ENCODE measurements at regions of chr20 and their contacts with region 1.

Region 1: DNA sequence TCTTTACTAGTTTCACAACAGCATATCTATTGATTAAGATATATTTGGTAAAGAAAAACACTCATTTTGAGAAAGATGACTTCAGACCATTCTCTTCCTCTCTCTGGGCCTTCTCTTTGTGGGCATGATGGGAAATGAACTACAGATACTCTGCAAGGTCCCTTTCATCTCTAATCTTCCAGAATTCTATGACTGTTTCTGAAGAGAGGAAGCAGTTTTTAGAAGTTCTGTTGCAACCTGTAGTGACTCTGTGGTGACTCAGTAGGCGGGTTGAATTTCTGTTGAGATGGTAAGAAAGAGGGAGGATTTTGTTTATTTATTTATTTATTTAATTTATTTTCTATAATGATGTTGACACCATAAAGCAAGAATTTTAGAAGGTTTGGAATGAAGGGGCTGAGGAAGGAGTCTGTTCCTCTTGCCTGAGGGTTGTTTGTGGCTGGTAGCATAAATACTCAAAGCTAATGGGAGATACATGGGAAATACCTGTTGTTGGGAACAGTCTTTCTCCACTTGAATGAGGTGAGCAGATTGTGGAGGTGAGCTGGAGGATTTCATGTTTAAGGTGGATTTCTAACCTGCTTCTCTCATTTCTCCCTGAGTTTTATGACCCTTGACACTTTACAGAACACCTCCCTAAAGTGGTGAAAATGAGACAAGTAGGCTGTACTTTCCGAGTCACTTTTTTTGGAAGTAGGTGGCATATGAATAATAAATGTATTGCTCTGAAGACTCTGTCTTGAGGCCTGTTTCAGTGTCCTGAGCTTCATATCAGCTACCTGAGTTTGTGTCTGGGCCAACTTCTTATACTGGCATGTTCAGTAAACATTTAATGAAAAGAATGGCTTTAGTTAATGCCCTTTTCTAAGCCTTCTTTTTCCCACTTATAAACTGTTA is 15.0 kb downstream of the ACSS2 start:
- DNase-seq: peak in 2 of 35 experiments; percentile 16 to 19
- ATAC-seq: peak; percentile 74 to 91 (median 89)
- H3K4me3 ChIP-seq: no peak overlapping the region
- H3K4me3 Mint-ChIP-seq: no peak overlapping the region
- H3K27ac ChIP-seq: no peak overlapping the region
- H3K27ac Mint-ChIP-seq: peak overlapping the region; percentile 23 to 49
- H3K4me1 ChIP-seq: peaks cover 0 to 11% of the 10 kb centered on the region in 2 experiments
- H3K4me1 Mint-ChIP-seq: peaks cover 24 to 31% (median 29%) of the 10 kb centered on the region in 3 donors
- H3K27me3 ChIP-seq: no peaks in the 10 kb centered on the region
- H3K27me3 Mint-ChIP-seq: no peaks in the 10 kb centered on the region

Region 2: DNA sequence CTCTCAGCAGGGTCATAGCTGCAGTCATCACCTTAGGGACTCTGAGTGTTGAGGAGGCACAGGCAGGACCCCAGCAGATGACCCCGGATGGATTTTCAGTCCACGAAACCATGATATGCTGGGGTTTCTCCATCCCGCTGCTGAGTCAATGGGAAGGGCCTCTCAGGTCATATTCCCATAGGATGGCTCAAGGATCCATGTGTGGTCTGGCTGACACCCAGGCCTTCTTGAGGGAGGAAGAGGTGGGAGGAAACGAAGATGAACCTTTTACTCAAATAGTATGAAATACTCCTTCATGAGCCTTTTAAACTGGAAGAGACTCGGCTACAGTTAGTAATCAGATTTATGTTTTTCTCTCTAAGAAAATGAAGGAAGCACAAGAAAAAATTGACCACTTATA is 908.0 kb before region 1 on chr20:
- CTCF ChIA-PET with region 1: no interaction called
- POLR2A ChIA-PET with region 1: interaction called in 1 of 2 experiments, 12 read pairs
- DNase-seq: no peak
- ATAC-seq: no peak
- H3K4me3 ChIP-seq: no peak overlapping the region
- H3K4me3 Mint-ChIP-seq: no peak overlapping the region
- H3K27ac ChIP-seq: no peak overlapping the region
- H3K27ac Mint-ChIP-seq: no peak overlapping the region
- H3K4me1 ChIP-seq: no peaks in the 10 kb centered on the region
- H3K4me1 Mint-ChIP-seq: no peaks in the 10 kb centered on the region
- H3K27me3 ChIP-seq: peaks cover 0 to 4% of the 10 kb centered on the region in 2 experiments
- H3K27me3 Mint-ChIP-seq: peaks cover 6 to 12% of the 10 kb centered on the region in 2 donors

Region 3: GRCh38 chr20:34834459-34834893 is 56.9 kb before region 1 on chr20:
- CTCF ChIA-PET with region 1: no interaction called
- POLR2A ChIA-PET with region 1: interaction called in 1 of 2 experiments, 10 read pairs
- DNase-seq: peak in 2 of 35 experiments; percentile 2 to 58
- ATAC-seq: peak in 2 of 4 experiments; percentile 38 to 44
- H3K4me3 ChIP-seq: no peak overlapping the region
- H3K4me3 Mint-ChIP-seq: no peak overlapping the region
- H3K27ac ChIP-seq: no peak overlapping the region
- H3K27ac Mint-ChIP-seq: no peak overlapping the region
- H3K4me1 ChIP-seq: no peaks in the 10 kb centered on the region
- H3K4me1 Mint-ChIP-seq: no peaks in the 10 kb centered on the region
- H3K27me3 ChIP-seq: peaks cover 0 to 13% of the 10 kb centered on the region in 2 experiments
- H3K27me3 Mint-ChIP-seq: peaks cover 12 to 15% of the 10 kb centered on the region in 2 donors

Region 4: DNA sequence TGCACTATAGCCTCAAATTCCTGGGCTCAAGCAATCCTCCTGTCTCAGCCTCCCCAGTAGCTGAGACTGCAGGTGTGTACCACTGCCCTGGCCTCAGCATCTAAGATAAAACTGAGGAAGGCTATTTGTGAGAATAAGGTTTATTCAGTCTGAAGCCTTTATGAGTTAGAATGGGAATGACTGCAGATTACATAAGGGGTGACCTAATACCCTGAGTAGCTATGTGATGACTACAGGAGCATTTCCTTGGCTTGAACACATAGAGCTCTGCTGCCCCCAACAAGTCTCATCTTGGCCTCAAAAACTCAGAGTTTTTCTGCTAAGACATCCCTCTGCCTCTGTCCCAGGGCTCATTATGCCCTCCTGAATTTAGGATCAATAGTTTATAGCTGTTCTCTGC is 56.6 kb after region 1 on chr20:
- CTCF ChIA-PET with region 1: no interaction called
- POLR2A ChIA-PET with region 1: no interaction called
- DNase-seq: no peak
- ATAC-seq: no peak
- H3K4me3 ChIP-seq: no peak overlapping the region
- H3K4me3 Mint-ChIP-seq: no peak overlapping the region
- H3K27ac ChIP-seq: no peak overlapping the region
- H3K27ac Mint-ChIP-seq: no peak overlapping the region
- H3K4me1 ChIP-seq: no peaks in the 10 kb centered on the region
- H3K4me1 Mint-ChIP-seq: peaks cover 0 to 5% (median 5%) of the 10 kb centered on the region in 3 donors
- H3K27me3 ChIP-seq: no peaks in the 10 kb centered on the region
- H3K27me3 Mint-ChIP-seq: no peaks in the 10 kb centered on the region